Calu3 (cell line): ENCODE measurements at regions of chr15 and their contacts with region 1.

Region 1: GRCh38 chr15:39312984-39313383 is 267.9 kb upstream of the THBS1 start:
- DNase-seq: peak; percentile 39
- H3K4me3 Mint-ChIP-seq: no peak overlapping the region
- H3K27ac Mint-ChIP-seq: no peak overlapping the region
- H3K4me1 Mint-ChIP-seq: no peaks in the 10 kb centered on the region
- H3K27me3 Mint-ChIP-seq: no peaks in the 10 kb centered on the region
- CTCF ChIP-seq: no peak

Region 2: GRCh38 chr15:39391230-39391629 is 78.2 kb after region 1 on chr15:
- CTCF ChIA-PET with region 1: no interaction called
- intact Hi-C with region 1: no loop called
- DNase-seq: no peak
- H3K4me3 Mint-ChIP-seq: no peak overlapping the region
- H3K27ac Mint-ChIP-seq: no peak overlapping the region
- H3K4me1 Mint-ChIP-seq: peaks cover 8% of the 10 kb centered on the region
- H3K27me3 Mint-ChIP-seq: no peaks in the 10 kb centered on the region
- CTCF ChIP-seq: no peak

Region 3: GRCh38 chr15:39429898-39430357 is 116.9 kb after region 1 on chr15:
- CTCF ChIA-PET with region 1: interaction called, 6 read pairs
- intact Hi-C with region 1: loop called (anchors 10 kb)
- DNase-seq: peak; percentile 14
- H3K4me3 Mint-ChIP-seq: no peak overlapping the region
- H3K27ac Mint-ChIP-seq: peak overlapping the region; percentile 58
- H3K4me1 Mint-ChIP-seq: peaks cover 12% of the 10 kb centered on the region
- H3K27me3 Mint-ChIP-seq: no peaks in the 10 kb centered on the region
- CTCF ChIP-seq: no peak